GM12878 (cell line): ENCODE measurements at regions of chr22 and their contacts with region 1.

Region 1: GRCh38 chr22:31080848-31081649 is at the start of gene SMTN:
- DNase-seq: peak; percentile 56
- ATAC-seq: peak; percentile 74
- H3K4me3 ChIP-seq: peak within 1 kb of the TSS; percentile 80
- H3K27ac ChIP-seq: peak within 1 kb of the TSS; percentile 71
- H3K4me1 ChIP-seq: peaks cover 28% of the 10 kb centered on the region
- H3K27me3 ChIP-seq: no peaks in the 10 kb centered on the region
- CTCF ChIP-seq: no peak
- EP300 ChIP-seq: no peak
- POLR2A ChIP-seq: peak; percentile 91
- RAD21 ChIP-seq: no peak
- polyA plus RNA-seq, gene SMTN: 0.92 to 2.6 TPM

Region 2: GRCh38 chr22:30763815-30764686 is 317.0 kb before region 1 on chr22:
- CTCF ChIA-PET with region 1: interaction called, 14 read pairs
- POLR2A ChIA-PET with region 1: no interaction called
- RAD21 ChIA-PET with region 1: interaction called, 6 read pairs
- SMC1A ChIA-PET with region 1: interaction called, 4 read pairs
- in situ Hi-C with region 1: no loop called
- intact Hi-C with region 1: loop called (anchors 5 kb)
- DNase-seq: no peak
- ATAC-seq: peak; percentile 90
- H3K4me3 ChIP-seq: no peak overlapping the region
- H3K27ac ChIP-seq: no peak overlapping the region
- H3K4me1 ChIP-seq: no peaks in the 10 kb centered on the region
- H3K27me3 ChIP-seq: no peaks in the 10 kb centered on the region
- CTCF ChIP-seq: peak; percentile 60 to 78 (median 62); a peak in 5 of 6 replicates
- EP300 ChIP-seq: no peak
- POLR2A ChIP-seq: no peak
- RAD21 ChIP-seq: peak; percentile 90

Region 3: DNA sequence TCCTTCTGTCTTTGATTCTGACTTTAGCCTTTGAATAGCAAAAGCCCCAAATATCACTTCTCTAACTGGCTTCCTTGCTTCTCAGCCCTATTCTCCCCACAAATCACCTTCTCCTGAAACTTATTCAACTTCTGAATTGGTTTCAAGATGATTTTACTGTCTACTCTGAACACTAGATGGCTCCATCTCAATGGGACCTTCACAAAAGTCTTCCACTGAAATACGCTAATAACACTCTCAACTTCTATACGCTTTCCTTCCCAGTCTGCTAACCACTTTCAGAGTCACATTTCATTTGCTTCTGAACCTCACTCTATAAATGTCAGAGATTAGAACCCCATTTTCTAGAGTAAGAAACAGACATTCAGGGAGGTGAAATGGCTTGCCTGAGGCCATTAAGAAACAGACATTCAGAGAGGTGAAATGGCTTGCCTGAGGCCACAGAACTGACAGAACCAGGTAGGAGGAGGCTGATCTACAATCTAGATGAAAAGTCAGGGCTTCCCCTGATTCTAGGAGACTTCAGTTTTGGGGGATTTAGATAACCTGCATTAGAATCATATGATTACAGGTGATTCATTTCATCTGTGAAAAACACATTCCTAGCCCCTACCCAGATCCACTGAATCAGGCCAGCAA is 133.1 kb before region 1 on chr22:
- CTCF ChIA-PET with region 1: interaction called, 32 read pairs
- POLR2A ChIA-PET with region 1: no interaction called
- RAD21 ChIA-PET with region 1: interaction called, 16 read pairs
- SMC1A ChIA-PET with region 1: interaction called, 8 read pairs
- in situ Hi-C with region 1: no loop called
- intact Hi-C with region 1: loop called (anchors 1 kb)
- DNase-seq: no peak
- ATAC-seq: 0 out of 3 replicates have a peak, but pooled peaks have one; percentile 31
- H3K4me3 ChIP-seq: no peak overlapping the region
- H3K27ac ChIP-seq: no peak overlapping the region
- H3K4me1 ChIP-seq: no peaks in the 10 kb centered on the region
- H3K27me3 ChIP-seq: no peaks in the 10 kb centered on the region
- CTCF ChIP-seq: peak; percentile 23 to 50 (median 38); a peak in 4 of 6 replicates
- EP300 ChIP-seq: no peak
- POLR2A ChIP-seq: no peak
- RAD21 ChIP-seq: peak; percentile 49

Region 4: DNA sequence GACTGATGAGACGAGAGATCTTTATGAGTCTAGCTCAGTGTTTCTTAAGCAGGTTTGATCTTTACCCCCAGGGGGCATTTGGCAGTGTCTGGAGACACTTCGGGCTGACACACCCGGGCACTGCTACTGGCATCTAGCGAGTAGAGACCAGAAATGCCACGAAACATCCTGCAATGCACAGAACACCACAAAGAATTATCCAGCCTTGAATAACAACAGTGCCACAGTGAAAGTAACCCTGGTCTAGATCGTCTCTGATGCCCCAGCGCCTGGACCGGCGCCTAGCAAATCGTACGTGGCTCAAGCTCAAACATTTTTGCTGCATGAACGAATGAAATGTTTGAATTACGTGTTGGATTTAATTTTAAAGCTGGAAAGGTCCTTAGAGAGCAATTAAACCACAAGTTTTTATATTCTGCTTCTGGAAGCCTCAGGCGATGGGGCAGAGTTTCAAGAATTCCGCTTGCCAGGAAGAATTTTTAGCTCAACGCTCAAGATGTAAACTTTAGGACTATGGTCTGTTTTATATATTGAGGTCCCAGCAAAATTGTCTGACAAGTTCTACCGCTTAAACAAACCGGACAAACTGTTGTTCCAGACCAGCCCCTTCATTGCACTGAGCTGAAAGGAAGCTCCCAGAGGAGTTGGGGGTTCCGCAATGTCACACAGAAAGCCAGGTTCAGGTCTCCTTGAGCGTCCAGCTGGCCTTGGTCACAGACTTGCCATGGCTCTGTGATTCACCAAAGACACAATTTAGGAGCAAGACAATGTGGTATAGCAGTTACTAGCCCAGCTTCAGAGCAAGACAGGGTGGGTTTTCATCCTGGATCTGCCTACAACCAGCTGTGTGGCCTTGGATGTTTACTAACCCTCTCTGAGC is 44.1 kb before region 1 on chr22:
- CTCF ChIA-PET with region 1: no interaction called
- POLR2A ChIA-PET with region 1: no interaction called
- RAD21 ChIA-PET with region 1: no interaction called
- SMC1A ChIA-PET with region 1: no interaction called
- in situ Hi-C with region 1: no loop called
- intact Hi-C with region 1: no loop called
- DNase-seq: no peak
- ATAC-seq: no peak
- H3K4me3 ChIP-seq: no peak overlapping the region
- H3K27ac ChIP-seq: no peak overlapping the region
- H3K4me1 ChIP-seq: no peaks in the 10 kb centered on the region
- H3K27me3 ChIP-seq: no peaks in the 10 kb centered on the region; a peak in 1 of 4 replicates
- CTCF ChIP-seq: no peak
- EP300 ChIP-seq: no peak
- POLR2A ChIP-seq: no peak
- RAD21 ChIP-seq: no peak

Region 5: DNA sequence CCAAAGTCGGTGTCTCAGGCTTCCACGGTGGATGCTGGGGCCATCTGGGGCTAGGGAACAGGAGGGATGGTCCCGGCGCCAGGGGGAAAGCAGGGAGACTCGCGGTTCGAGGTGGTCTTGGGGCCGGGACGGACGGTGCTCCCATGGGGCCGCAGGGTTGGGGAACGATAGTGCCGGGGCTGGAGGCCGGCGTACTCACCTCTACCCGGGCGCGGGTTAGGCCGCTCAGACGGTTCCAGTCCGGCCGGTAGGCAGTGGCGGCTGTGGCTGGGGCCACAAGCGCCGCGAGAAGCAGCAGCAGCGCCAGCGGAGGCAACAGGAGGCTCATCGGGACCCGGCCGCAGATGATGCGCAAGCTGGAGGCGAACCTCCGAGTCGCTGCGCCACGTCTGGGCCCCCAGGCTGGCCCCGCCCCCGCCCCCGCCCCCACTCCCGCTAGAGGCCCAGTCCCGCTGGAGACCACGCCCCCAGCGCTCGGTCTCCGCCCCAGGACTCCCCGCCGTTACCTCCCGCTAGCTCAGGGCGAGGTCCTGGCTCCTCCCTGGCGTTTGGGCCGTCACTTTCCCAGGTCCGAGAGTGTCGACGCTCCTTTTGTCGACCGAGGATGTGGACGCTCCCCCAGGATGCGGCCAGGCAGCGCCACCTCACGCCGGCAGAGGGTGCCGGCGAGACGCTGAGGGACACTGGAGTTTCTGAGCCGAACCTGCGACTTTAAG is 26.3 kb after region 1 on chr22 and contains the start of gene SELENOM:
- CTCF ChIA-PET with region 1: interaction called, 15 read pairs
- POLR2A ChIA-PET with region 1: no interaction called
- RAD21 ChIA-PET with region 1: interaction called, 6 read pairs
- SMC1A ChIA-PET with region 1: no interaction called
- in situ Hi-C with region 1: no loop called
- intact Hi-C with region 1: no loop called
- DNase-seq: peak; percentile 53
- ATAC-seq: peak; percentile 94
- H3K4me3 ChIP-seq: peak within 1 kb of the TSS; percentile 54
- H3K27ac ChIP-seq: no peak within 1 kb of the TSS
- H3K4me1 ChIP-seq: no peaks in the 10 kb centered on the region; the same call in 1 of the 2 replicates
- H3K27me3 ChIP-seq: no peaks in the 10 kb centered on the region
- CTCF ChIP-seq: peak; percentile 89 to 91 (median 90)
- EP300 ChIP-seq: no peak
- POLR2A ChIP-seq: peak; percentile 72
- RAD21 ChIP-seq: peak; percentile 58
- polyA plus RNA-seq, gene SELENOM: 0.80 to 1.3 TPM

Region 6: DNA sequence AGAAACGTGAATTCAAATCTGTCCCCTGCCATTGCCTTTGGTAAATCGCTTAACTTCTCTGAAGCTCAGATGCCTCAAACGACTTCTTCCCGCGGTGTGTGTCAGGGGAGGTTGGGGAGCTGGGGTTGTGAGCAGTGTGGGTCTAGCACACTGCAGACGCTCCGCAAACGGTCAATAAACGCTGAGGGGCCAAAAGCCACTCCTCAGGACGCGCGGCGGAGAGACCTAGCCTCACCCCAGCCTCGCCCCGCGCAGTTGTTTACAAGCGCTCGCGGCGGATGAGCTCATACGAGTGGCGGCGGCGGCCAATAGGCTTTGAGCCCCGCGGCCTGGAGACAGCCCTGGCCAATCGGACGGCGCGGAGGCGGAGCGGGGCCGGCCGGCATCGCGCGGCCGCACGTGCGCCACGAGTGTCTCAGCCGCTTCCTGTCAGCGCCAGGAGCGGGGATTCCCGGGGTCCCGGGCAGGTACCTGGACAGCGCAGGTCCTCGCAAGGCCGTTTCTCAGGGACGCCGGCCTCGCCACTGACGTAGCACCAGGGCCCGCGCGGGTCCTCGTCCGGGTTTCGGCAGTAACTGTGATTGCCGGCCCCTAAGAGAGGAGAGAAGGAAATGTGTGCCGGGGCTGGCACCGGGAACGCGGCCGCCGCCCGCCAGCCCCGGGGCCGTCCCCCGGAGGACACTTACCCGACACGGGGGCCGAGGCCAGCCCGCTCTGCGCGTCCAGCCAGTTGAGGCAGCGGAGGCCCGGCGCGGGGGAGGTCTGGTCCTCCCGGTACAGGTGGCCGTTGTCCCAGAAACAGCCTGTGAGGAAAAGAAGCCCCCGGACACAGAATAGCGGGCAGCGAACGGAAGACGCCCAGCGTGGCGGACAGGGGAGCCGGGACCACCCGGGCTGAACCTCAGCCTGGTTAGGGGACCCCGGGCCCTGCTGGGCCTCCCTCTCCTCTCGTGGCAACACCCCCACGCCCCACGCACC is 209.7 kb after region 1 on chr22:
- CTCF ChIA-PET with region 1: no interaction called
- POLR2A ChIA-PET with region 1: interaction called, 3 read pairs
- RAD21 ChIA-PET with region 1: interaction called, 5 read pairs
- SMC1A ChIA-PET with region 1: interaction called, 3 read pairs
- in situ Hi-C with region 1: no loop called
- intact Hi-C with region 1: loop called (anchors 10 kb)
- DNase-seq: peak; percentile 48
- ATAC-seq: peak; percentile 96
- H3K4me3 ChIP-seq: peak overlapping the region; percentile 82
- H3K27ac ChIP-seq: peak overlapping the region; percentile 72
- H3K4me1 ChIP-seq: peaks cover 32% of the 10 kb centered on the region
- H3K27me3 ChIP-seq: no peaks in the 10 kb centered on the region
- CTCF ChIP-seq: no peak
- EP300 ChIP-seq: peak in 1 of 2 experiments; percentile 45; a peak in 1 of 4 replicates
- POLR2A ChIP-seq: peak; percentile 87
- RAD21 ChIP-seq: no peak